ENCODE measurements at regions of chr15 and their contacts with region 1.

Region 1: DNA sequence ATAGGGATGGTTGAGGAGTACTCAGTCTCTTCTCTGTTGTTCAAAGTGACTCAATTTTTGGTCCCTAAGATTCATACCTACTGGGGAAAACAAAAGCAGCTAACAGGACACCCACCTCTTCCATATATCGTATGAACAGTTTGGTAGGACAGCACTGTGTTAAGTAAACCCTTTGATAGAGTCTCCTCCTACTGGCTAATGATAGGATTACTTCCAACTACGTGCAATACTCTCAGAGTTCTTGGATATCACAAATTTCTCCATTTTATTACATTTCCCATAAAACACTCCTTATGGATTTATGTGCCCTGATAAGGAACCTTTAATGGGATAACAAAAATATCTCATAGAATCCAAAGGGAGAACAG is 200.2 kb upstream of the GOLGA6L4 start:
- DNase-seq: peak; percentile 46
- ATAC-seq: peak; percentile 88
- H3K4me3 ChIP-seq: no peak overlapping the region
- H3K27ac ChIP-seq: no peak overlapping the region
- H3K4me1 ChIP-seq: peaks cover 0 to 3% of the 10 kb centered on the region in 2 experiments; a peak in 1 of 4 replicates
- H3K27me3 ChIP-seq: peaks cover 17% of the 10 kb centered on the region; the same call in 1 of the 2 replicates
- CTCF ChIP-seq: peak; percentile 47 to 61 (median 58); a peak in 5 of 6 replicates
- POLR2A ChIP-seq: no peak
- RAD21 ChIP-seq: peak; percentile 43

Region 2: GRCh38 chr15:83567318-83567717 is 468.1 kb before region 1 on chr15:
- CTCF ChIA-PET with region 1: interaction called, 33 read pairs
- POLR2A ChIA-PET with region 1: no interaction called
- RAD21 ChIA-PET with region 1: interaction called, 3 to 4 read pairs
- intact Hi-C with region 1: loop called (anchors 5 kb)
- DNase-seq: no peak
- ATAC-seq: no peak
- H3K4me3 ChIP-seq: no peak overlapping the region
- H3K27ac ChIP-seq: no peak overlapping the region
- H3K4me1 ChIP-seq: no peaks in the 10 kb centered on the region; a peak in 1 of 4 replicates
- H3K27me3 ChIP-seq: no peaks in the 10 kb centered on the region
- CTCF ChIP-seq: no peak
- POLR2A ChIP-seq: no peak
- RAD21 ChIP-seq: no peak

Region 3: DNA sequence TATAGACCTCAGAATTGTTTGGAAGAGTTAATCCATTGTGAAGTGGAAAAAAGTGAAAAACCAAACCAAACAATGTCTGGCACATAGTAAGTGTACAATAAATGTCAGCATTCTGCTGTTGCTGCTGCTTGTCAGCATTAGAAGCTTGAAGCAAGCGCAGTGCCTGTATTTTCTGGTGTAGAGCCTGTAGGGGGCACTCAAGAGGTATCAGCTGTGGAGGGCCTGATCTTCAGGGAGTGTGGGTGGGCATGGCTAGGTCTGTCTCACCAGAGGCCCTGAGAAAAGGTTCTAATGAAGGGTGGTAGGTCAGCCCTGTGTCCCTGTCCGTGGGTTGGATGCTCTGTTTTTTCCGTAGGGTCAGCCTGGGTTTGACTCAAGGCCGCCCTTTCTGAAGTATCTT is 377.8 kb before region 1 on chr15:
- CTCF ChIA-PET with region 1: interaction called, 17 read pairs
- POLR2A ChIA-PET with region 1: no interaction called
- RAD21 ChIA-PET with region 1: no interaction called
- intact Hi-C with region 1: no loop called
- DNase-seq: peak; percentile 6
- ATAC-seq: peak; percentile 73
- H3K4me3 ChIP-seq: no peak overlapping the region
- H3K27ac ChIP-seq: no peak overlapping the region
- H3K4me1 ChIP-seq: no peaks in the 10 kb centered on the region
- H3K27me3 ChIP-seq: no peaks in the 10 kb centered on the region
- CTCF ChIP-seq: peak; percentile 39 to 62 (median 48); a peak in 5 of 6 replicates
- POLR2A ChIP-seq: no peak
- RAD21 ChIP-seq: peak; percentile 48

Region 4: DNA sequence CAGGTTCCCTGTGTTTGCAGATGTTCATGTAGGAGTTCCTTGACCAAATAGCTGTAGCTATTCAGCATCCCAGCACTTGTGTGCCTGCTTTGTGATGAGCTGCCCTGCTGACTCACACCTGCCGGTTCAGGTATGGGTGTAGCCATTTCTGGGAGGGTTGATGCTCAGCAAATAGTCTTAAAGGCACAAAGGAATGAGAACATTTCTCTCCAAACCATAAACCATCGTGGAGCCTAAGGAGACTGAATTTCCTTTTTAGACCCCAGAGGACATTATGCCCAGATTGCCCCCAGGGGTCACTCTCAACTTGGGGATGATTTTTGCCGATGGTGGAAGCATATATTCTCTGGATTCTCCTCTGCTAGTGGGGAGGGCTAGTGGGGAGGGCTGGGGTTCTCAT is 300.9 kb before region 1 on chr15:
- CTCF ChIA-PET with region 1: interaction called, 12 read pairs
- POLR2A ChIA-PET with region 1: interaction called, 3 read pairs
- RAD21 ChIA-PET with region 1: no interaction called
- intact Hi-C with region 1: loop called (anchors 10 kb)
- DNase-seq: peak; percentile 18
- ATAC-seq: peak; percentile 68
- H3K4me3 ChIP-seq: no peak overlapping the region
- H3K27ac ChIP-seq: no peak overlapping the region
- H3K4me1 ChIP-seq: peaks cover 9 to 23% of the 10 kb centered on the region in 2 experiments
- H3K27me3 ChIP-seq: 0 out of 2 replicates have a peak, but pooled peaks cover 9% of the 10 kb centered on the region
- CTCF ChIP-seq: peak; percentile 16 to 33 (median 29); a peak in 5 of 6 replicates
- POLR2A ChIP-seq: no peak
- RAD21 ChIP-seq: peak; percentile 52

Region 5: GRCh38 chr15:84023636-84024035 is 11.7 kb before region 1 on chr15:
- CTCF ChIA-PET with region 1: interaction called, 15 read pairs
- POLR2A ChIA-PET with region 1: no interaction called
- RAD21 ChIA-PET with region 1: no interaction called
- intact Hi-C with region 1: no loop called
- DNase-seq: peak; percentile 28
- ATAC-seq: peak; percentile 86
- H3K4me3 ChIP-seq: no peak overlapping the region
- H3K27ac ChIP-seq: no peak overlapping the region
- H3K4me1 ChIP-seq: no peaks in the 10 kb centered on the region
- H3K27me3 ChIP-seq: peaks cover 11% of the 10 kb centered on the region; the same call in 1 of the 2 replicates
- CTCF ChIP-seq: peak in 2 of 3 experiments; percentile 72 to 74; a peak in 4 of 6 replicates
- POLR2A ChIP-seq: no peak
- RAD21 ChIP-seq: peak; percentile 43; the same call in 1 of the 2 replicates

Region 6: DNA sequence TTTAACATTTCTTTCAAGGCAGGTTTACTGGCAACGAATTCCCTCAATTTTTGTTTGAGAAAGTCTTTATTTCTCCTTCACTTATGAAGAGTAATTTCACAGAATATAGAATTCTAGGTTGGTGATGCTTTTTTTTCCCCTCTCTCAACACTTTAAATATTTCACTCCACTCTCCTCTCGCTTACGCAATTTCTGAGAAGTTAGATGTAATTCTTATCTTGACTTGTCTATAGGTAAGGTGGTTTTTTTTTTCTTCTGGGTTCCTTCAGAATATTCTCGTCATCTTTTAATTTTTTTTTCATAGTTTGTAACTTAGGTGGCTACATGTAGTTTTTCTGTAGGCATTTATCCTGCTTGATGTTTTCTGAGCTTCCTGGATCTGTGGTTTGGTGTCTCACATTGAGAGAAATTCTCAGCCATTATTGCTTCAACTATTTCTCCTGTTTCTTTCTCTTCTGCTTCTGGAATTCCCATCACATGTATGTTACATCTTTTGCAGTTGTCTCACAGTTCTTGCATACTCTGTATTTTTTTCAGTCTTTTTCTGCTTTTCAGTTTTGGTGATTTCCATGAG is 10.8 kb after region 1 on chr15:
- CTCF ChIA-PET with region 1: no interaction called
- POLR2A ChIA-PET with region 1: no interaction called
- RAD21 ChIA-PET with region 1: no interaction called
- intact Hi-C with region 1: no loop called
- DNase-seq: no peak
- ATAC-seq: no peak
- H3K4me3 ChIP-seq: no peak overlapping the region
- H3K27ac ChIP-seq: no peak overlapping the region
- H3K4me1 ChIP-seq: no peaks in the 10 kb centered on the region
- H3K27me3 ChIP-seq: no peaks in the 10 kb centered on the region
- CTCF ChIP-seq: no peak
- POLR2A ChIP-seq: no peak
- RAD21 ChIP-seq: no peak